CD8-positive, alpha-beta T cell (primary cell): ENCODE measurements at regions of chr2 and their contacts with region 1.

Region 1: DNA sequence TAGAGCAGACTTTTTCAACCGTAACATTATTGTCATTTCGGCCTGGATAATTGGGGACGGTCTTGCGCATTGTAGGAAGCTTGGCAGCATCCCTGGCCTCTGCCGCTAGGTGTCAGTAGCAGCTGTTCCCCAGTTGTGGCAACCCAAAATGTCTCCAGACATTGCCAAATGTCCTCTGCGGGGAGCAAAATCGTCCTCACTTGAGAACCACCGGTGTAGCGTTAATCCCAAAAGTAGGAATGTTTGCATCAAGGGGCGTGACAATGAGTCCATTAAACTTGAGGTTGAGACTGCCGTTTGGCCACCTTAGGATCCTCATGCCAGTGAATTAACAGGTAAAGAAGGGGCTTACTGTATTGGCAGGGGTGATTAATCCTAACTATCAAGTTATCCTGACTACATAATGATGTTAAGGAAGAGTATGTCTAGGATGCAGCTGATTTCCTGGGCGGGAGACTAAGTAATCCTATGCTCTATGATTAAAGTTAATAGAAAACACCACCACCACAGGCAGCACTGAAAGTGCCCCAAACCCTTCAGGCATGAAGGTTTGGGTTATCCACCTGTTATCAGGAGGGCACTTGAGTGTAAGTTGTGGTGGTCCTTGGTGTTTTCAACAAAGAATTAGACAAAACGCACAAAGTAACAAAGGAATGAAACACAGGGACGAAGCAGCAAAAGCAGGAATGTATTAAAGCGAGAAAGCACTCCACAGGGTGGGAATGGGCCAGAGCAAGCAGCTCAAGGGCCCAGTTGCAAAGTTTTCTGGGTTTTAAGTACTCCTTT is 4.9 kb upstream of the ZC3H8 start:
- DNase-seq: peak; percentile 72 to 90 (median 87)
- ATAC-seq: peak; percentile 54
- H3K4me3 ChIP-seq: peak overlapping the region in 1 of 2 experiments; percentile 18
- H3K4me3 Mint-ChIP-seq: peak overlapping the region; percentile 76
- H3K27ac ChIP-seq: no peak overlapping the region
- H3K27ac Mint-ChIP-seq: peak overlapping the region; percentile 75
- H3K4me1 ChIP-seq: peaks cover 6% of the 10 kb centered on the region
- H3K4me1 Mint-ChIP-seq: peaks cover 9% of the 10 kb centered on the region
- H3K27me3 ChIP-seq: no peaks in the 10 kb centered on the region
- H3K27me3 Mint-ChIP-seq: peaks cover 3% of the 10 kb centered on the region
- CTCF ChIP-seq: peak; percentile 96

Region 2: DNA sequence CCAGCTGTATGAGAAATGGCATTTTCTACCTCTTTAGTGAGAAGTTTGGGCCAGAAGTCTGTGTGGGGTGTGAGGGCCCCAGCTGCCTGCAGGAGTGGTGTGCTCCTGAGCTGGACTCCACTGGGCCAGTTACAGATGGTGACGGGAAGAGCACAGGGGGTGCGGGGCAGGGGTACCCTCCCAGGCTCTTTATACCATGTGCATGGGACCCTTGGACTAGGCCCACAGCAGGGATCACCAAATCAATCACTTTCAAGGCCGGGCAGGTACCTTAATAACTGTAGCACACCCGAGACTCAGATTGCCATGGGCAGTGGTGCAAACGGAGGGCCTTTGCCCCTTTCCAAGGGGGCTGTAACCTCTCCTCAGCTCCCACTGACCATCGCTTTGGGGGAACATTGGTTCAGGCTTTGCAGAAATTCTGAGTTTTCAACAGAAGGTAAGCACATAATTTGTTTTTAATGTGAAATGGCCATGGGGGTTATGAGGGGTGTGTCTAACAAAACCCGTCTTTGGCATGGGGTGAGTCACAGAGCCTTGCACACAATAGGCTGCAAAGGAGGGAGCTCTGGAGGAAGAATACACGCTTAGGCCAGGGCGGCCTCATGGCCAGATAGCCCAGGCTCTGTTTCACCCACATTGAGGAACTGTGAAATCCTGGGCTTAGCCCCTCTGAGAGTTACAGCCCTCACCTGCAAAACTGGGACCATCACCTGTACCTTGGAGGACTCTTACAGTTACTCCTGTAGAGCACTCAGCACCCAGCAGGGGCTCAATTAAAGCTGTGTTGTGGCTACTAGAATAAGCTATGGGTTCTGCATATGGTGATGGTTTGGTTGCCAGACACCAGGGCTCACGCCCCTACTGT is 1280.0 kb before region 1 on chr2:
- CTCF ChIA-PET with region 1: no interaction called
- POLR2A ChIA-PET with region 1: no interaction called
- intact Hi-C with region 1: no loop called
- DNase-seq: no peak
- ATAC-seq: no peak
- H3K4me3 ChIP-seq: no peak overlapping the region
- H3K4me3 Mint-ChIP-seq: no peak overlapping the region
- H3K27ac ChIP-seq: no peak overlapping the region
- H3K27ac Mint-ChIP-seq: no peak overlapping the region
- H3K4me1 ChIP-seq: no peaks in the 10 kb centered on the region
- H3K4me1 Mint-ChIP-seq: no peaks in the 10 kb centered on the region
- H3K27me3 ChIP-seq: no peaks in the 10 kb centered on the region
- H3K27me3 Mint-ChIP-seq: no peaks in the 10 kb centered on the region
- CTCF ChIP-seq: no peak

Region 3: GRCh38 chr2:112301171-112301584 is 41.5 kb after region 1 on chr2:
- CTCF ChIA-PET with region 1: interaction called, 3 read pairs
- POLR2A ChIA-PET with region 1: no interaction called
- intact Hi-C with region 1: loop called in 1 of 2 experiments (anchors 5 kb)
- DNase-seq: no peak
- ATAC-seq: no peak
- H3K4me3 ChIP-seq: no peak overlapping the region
- H3K4me3 Mint-ChIP-seq: no peak overlapping the region
- H3K27ac ChIP-seq: no peak overlapping the region
- H3K27ac Mint-ChIP-seq: no peak overlapping the region
- H3K4me1 ChIP-seq: no peaks in the 10 kb centered on the region
- H3K4me1 Mint-ChIP-seq: peaks cover 6% of the 10 kb centered on the region
- H3K27me3 ChIP-seq: no peaks in the 10 kb centered on the region
- H3K27me3 Mint-ChIP-seq: no peaks in the 10 kb centered on the region
- CTCF ChIP-seq: no peak

Region 4: GRCh38 chr2:112310906-112311305 is 51.2 kb after region 1 on chr2:
- CTCF ChIA-PET with region 1: interaction called, 10 read pairs
- POLR2A ChIA-PET with region 1: no interaction called
- intact Hi-C with region 1: no loop called
- DNase-seq: no peak
- ATAC-seq: no peak
- H3K4me3 ChIP-seq: no peak overlapping the region
- H3K4me3 Mint-ChIP-seq: no peak overlapping the region
- H3K27ac ChIP-seq: no peak overlapping the region
- H3K27ac Mint-ChIP-seq: no peak overlapping the region
- H3K4me1 ChIP-seq: no peaks in the 10 kb centered on the region
- H3K4me1 Mint-ChIP-seq: no peaks in the 10 kb centered on the region
- H3K27me3 ChIP-seq: no peaks in the 10 kb centered on the region
- H3K27me3 Mint-ChIP-seq: no peaks in the 10 kb centered on the region
- CTCF ChIP-seq: no peak

Region 5: DNA sequence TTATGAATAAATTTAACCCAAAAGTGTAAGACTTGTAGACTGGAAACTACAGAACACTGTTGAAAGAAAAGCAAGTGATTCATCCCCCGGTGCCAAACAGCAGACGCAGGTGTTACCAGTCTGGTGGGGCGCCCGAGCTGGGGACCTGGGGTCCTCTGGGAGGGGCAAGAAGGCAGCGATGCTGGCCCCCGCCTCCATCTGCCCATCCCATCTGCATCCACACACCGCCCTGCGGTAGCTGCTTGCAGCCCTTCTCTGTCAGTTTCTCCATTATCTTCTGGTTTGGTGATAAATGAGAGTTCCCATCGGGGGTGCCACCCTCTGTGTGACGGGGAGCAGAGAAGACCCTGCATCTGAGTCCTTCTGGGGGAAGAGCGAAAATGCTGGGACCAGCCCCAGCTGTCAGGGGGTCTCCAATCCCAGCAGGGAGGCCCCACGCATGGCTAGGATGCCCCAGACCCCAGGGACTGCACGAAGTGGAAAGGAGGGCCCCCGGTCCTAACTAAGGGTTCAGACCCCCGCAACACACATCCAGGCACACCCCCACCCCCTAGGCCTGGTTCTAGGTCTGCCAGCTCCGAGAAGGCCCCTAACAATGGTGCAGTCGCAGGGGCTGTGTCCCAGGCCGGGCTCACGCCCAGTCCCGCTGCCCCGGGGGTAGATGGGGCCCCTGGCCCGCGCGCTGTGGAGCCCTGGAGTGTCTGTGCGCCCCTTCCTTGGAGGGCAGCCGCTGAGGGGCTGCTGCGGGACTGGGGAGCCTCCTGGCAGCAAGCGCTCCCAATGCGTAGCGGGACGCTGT is 174.4 kb after region 1 on chr2:
- CTCF ChIA-PET with region 1: interaction called, 8 read pairs
- POLR2A ChIA-PET with region 1: no interaction called
- intact Hi-C with region 1: loop called in 1 of 2 experiments (anchors 1 kb)
- DNase-seq: peak in 2 of 9 experiments; percentile 15 to 19
- ATAC-seq: no peak
- H3K4me3 ChIP-seq: no peak overlapping the region
- H3K4me3 Mint-ChIP-seq: no peak overlapping the region
- H3K27ac ChIP-seq: no peak overlapping the region
- H3K27ac Mint-ChIP-seq: no peak overlapping the region
- H3K4me1 ChIP-seq: peaks cover 9% of the 10 kb centered on the region
- H3K4me1 Mint-ChIP-seq: peaks cover 18% of the 10 kb centered on the region
- H3K27me3 ChIP-seq: no peaks in the 10 kb centered on the region
- H3K27me3 Mint-ChIP-seq: peaks cover 14% of the 10 kb centered on the region
- CTCF ChIP-seq: no peak